ENCODE measurements at regions of chr20 and their contacts with region 1.

Region 1: DNA sequence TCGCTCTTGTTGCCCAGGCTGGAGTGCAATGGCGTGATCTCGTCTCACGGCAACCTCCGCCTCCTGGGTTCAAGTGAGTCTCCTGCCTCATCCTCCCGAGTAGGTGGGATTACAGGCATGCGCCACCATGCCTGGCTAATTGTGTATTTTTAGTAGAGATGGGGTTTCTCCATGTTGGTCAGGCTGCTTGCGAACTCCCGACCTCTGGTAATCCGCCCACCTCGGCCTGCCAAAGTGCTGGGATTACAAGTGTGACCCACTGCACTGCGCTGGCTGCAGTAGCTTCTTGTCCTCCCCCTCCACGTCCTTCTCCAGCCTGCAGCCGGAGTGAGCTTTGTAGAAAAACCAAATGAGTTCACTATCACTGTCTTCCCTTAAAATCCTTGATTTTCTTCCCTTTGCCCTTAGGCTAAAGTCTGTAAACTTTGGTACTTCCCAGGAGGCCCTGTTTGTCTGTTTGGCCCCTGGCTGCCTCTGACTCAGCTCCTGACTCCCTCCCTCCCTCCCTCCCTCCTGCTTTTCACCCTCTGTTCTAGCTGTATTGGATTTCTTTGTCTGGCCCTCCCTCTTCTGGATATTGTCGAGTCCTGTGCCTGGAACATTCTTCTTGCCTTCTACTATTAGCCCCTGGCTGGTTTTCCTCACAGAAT is 12.9 kb downstream of the PARD6B start:
- DNase-seq: peak; percentile 85 to 86
- ATAC-seq: peak; percentile 97 to 99
- H3K4me3 ChIP-seq: peak overlapping the region in 1 of 4 donors; percentile 33
- H3K27ac ChIP-seq: peak overlapping the region; percentile 85 to 94 (median 92)
- H3K4me1 ChIP-seq: peaks cover 35 to 43% of the 10 kb centered on the region in 2 donors
- H3K27me3 ChIP-seq: no peaks in the 10 kb centered on the region
- CTCF ChIP-seq: peak in 4 of 5 experiments; percentile 11 to 42 (median 32)
- POLR2A ChIP-seq: no peak

Region 2: GRCh38 chr20:50625986-50626677 is 118.1 kb before region 1 on chr20:
- in situ Hi-C with region 1: no loop called
- intact Hi-C with region 1: loop called (anchors 10 kb)
- DNase-seq: peak; percentile 53 to 76
- ATAC-seq: peak; percentile 69 to 85
- H3K4me3 ChIP-seq: no peak overlapping the region
- H3K27ac ChIP-seq: peak overlapping the region; percentile 53 to 65 (median 60)
- H3K4me1 ChIP-seq: peaks cover 9 to 13% of the 10 kb centered on the region in 2 donors
- H3K27me3 ChIP-seq: no peaks in the 10 kb centered on the region
- CTCF ChIP-seq: peak in 4 of 5 experiments; percentile 55 to 64 (median 60)
- POLR2A ChIP-seq: no peak

Region 3: GRCh38 chr20:50663095-50663850 is 81.0 kb before region 1 on chr20:
- in situ Hi-C with region 1: loop called in 2 of 4 experiments (anchors 10 kb)
- intact Hi-C with region 1: loop called (anchors 1 kb)
- DNase-seq: no peak
- ATAC-seq: peak; percentile 33 to 43
- H3K4me3 ChIP-seq: no peak overlapping the region
- H3K27ac ChIP-seq: peak overlapping the region; percentile 70 to 79 (median 75)
- H3K4me1 ChIP-seq: peaks cover 19 to 30% of the 10 kb centered on the region in 2 donors
- H3K27me3 ChIP-seq: no peaks in the 10 kb centered on the region
- CTCF ChIP-seq: peak in 4 of 5 experiments; percentile 15 to 39 (median 28)
- POLR2A ChIP-seq: no peak

Region 4: GRCh38 chr20:50724851-50725721 is 19.2 kb before region 1 on chr20:
- in situ Hi-C with region 1: no loop called
- intact Hi-C with region 1: loop called (anchors 2 kb)
- DNase-seq: peak; percentile 51 to 85
- ATAC-seq: peak; percentile 77 to 83
- H3K4me3 ChIP-seq: no peak overlapping the region
- H3K27ac ChIP-seq: peak overlapping the region; percentile 79 to 95 (median 87)
- H3K4me1 ChIP-seq: peaks cover 14 to 35% of the 10 kb centered on the region in 2 donors
- H3K27me3 ChIP-seq: no peaks in the 10 kb centered on the region
- CTCF ChIP-seq: no peak
- POLR2A ChIP-seq: peak in 1 of 2 donors; percentile 18